Adrenal gland (tissue), 19 donors: ENCODE measurements at regions of chr6 and their contacts with region 1.

Region 1: GRCh38 chr6:75934643-75935472 is 137.6 kb downstream of the IMPG1 start:
- DNase-seq: peak; percentile 31 to 73 (median 43)
- H3K4me3 ChIP-seq: peak overlapping the region in 1 of 4 donors; percentile 39
- H3K27ac ChIP-seq: no peak overlapping the region
- H3K4me1 ChIP-seq: peaks cover 0 to 6% of the 10 kb centered on the region in 2 donors
- H3K27me3 ChIP-seq: no peaks in the 10 kb centered on the region
- CTCF ChIP-seq: peak; percentile 47 to 73 (median 63)
- POLR2A ChIP-seq: no peak

Region 2: DNA sequence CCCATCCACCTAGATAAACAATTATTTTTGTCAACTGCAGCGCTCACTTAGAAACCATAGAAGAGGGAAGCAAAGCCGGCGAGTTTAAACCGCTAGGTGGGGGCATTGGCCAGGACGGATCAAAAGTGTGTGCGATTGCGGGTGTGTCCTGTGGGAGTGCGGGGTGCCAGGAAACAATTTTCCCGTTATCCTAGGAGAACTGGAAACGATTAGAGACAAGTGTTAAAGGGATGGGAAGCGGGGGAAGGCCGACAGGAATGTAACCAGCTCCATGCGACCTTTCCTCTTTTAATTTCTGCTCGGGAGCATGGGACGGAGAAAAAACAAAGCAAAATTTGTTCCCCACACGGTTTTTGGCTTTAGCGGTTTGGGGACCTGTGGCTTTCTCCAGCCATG is 1531.2 kb after region 1 on chr6:
- intact Hi-C with region 1: loop called in 1 of 2 experiments (anchors 10 kb)
- DNase-seq: peak; percentile 46 to 84 (median 61)
- H3K4me3 ChIP-seq: peak overlapping the region in 2 of 4 donors; percentile 57 to 67
- H3K27ac ChIP-seq: no peak overlapping the region
- H3K4me1 ChIP-seq: peaks cover 5 to 18% of the 10 kb centered on the region in 2 donors
- H3K27me3 ChIP-seq: peaks cover 37% of the 10 kb centered on the region
- CTCF ChIP-seq: peak; percentile 35 to 56 (median 46)
- POLR2A ChIP-seq: no peak